MCF 10A (cell line): ENCODE measurements at regions of chr12 and their contacts with region 1.

Region 1: DNA sequence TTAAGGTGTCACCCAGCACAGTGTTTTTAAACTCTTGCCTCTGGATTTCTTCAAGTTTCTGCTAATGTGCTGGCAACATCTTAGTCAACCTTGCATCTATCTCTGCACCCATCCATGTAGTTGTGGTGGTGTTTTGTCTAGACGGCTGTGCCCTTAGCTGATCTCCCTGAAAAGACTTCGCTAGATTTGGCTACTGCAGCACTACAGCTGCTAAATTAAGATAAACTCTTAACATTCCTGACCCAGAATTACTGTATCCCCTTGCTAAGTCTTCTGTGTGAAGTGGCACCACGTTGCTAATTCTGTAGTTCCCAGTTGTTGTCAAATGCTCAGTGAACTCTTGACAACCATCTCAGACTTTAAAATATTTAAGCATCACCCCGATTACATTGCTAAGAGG is 66.8 kb downstream of the SRGAP1 start:
- DNase-seq: no peak
- H3K4me3 Mint-ChIP-seq: no peak overlapping the region
- H3K27ac Mint-ChIP-seq: peak overlapping the region; percentile 23
- H3K4me1 Mint-ChIP-seq: peaks cover 36% of the 10 kb centered on the region
- H3K27me3 Mint-ChIP-seq: no peaks in the 10 kb centered on the region
- CTCF ChIP-seq: no peak

Region 2: DNA sequence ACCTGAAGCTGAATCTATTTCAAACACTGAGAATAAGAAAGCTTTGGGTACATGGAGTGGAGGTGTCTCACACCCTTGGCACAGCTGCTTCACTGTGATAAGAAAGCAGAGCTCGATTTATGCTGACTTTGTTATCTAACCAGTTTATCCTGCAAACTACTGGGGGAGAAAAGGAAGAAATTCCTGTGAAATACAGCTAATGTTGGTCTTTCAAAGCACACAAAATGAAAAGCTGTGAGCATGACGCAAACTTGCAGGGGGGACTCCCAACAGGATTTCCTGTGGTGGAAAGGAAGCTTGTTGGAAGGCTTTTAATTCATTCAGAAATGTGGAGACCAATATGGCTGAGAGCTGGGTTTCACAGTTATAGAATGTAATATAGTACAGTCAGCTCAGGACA is 13.4 kb before region 1 on chr12:
- CTCF ChIA-PET with region 1: interaction called, 4 read pairs
- POLR2A ChIA-PET with region 1: interaction called, 11 read pairs
- intact Hi-C with region 1: no loop called
- DNase-seq: no peak
- H3K4me3 Mint-ChIP-seq: no peak overlapping the region
- H3K27ac Mint-ChIP-seq: peak overlapping the region; percentile 68
- H3K4me1 Mint-ChIP-seq: peaks cover 15% of the 10 kb centered on the region
- H3K27me3 Mint-ChIP-seq: no peaks in the 10 kb centered on the region
- CTCF ChIP-seq: no peak